ENCODE measurements at regions of chr16 and their contacts with region 1.

Region 1: DNA sequence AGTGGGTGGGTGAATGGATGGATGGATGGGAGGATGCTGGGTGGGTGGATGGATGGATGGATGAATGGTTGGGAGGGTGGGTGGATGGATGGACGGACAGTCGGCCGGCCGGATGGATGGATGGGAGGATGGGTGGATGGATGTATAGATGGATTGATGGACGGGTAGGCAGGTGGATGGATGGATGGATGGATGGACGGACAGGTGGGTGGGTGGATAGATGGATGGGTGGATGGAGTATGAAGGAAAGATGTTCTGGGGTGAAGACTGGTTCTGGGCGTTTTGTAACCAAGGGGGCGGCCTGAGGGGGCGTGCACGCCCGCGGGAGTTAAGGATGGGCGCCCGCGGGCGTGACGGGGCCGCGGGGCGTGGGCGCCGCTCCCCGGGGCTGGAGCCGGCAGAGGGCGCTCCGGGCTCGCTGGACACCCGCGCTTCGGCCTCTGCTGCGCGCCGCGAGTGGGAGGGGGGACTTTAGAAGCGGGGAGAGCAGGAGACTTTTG is at the start of gene NECAB2:
- DNase-seq: peak; percentile 83
- ATAC-seq: peak; percentile 54
- total RNA-seq, gene NECAB2: 0.84 TPM

Region 2: GRCh38 chr16:83926726-83927397 is 41.0 kb before region 1 on chr16:
- intact Hi-C with region 1: no loop called
- DNase-seq: peak; percentile 82
- ATAC-seq: peak; percentile 68

Region 3: DNA sequence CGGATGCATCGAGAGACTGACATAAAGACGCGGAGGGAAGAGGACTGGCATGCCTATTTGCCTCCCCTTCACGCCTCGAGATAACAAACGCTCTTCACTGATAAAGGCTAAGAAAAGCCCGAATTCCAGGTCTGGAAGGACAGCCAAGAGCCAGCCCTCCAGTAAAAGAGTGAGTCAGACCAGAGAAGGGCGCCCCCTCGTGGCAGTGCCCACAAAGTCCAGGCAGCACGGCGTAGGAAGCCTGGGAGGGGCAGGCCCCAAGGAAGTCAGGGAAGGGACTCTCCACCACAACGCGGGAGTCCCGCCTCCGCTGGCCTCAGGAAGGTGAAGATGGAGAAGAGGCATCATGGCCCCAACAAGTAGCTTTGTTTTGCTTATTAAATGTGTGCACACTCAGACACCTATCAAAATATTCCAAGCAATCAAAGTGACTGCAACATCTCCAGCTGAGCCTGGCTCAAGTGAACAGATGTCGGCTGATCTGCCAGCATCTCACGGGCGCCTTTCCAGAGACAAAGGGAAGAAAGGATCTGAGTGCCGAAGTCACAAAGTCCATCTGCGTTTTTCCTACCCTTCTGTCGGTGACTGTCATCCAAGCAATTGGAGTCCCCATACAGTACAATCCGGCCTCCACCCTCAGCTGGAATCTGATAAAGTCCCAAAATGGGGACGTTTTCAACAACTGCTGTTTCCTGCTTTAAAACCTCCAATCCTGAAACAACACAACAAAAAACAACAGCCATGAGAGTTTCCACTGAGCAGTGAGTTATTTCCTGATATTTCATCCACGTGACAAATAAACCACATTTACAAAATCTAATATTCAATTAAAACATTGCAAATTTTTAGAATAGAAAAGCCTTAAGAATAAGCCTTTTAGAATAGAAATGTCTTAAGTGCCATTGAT is 95.1 kb after region 1 on chr16:
- intact Hi-C with region 1: loop called (anchors 5 kb)
- DNase-seq: peak; percentile 87
- ATAC-seq: peak; percentile 81

Measured in left ventricle myocardium superior (tissue), 1 donor.